ENCODE measurements at regions of chr4 and their contacts with region 1.

Region 1: DNA sequence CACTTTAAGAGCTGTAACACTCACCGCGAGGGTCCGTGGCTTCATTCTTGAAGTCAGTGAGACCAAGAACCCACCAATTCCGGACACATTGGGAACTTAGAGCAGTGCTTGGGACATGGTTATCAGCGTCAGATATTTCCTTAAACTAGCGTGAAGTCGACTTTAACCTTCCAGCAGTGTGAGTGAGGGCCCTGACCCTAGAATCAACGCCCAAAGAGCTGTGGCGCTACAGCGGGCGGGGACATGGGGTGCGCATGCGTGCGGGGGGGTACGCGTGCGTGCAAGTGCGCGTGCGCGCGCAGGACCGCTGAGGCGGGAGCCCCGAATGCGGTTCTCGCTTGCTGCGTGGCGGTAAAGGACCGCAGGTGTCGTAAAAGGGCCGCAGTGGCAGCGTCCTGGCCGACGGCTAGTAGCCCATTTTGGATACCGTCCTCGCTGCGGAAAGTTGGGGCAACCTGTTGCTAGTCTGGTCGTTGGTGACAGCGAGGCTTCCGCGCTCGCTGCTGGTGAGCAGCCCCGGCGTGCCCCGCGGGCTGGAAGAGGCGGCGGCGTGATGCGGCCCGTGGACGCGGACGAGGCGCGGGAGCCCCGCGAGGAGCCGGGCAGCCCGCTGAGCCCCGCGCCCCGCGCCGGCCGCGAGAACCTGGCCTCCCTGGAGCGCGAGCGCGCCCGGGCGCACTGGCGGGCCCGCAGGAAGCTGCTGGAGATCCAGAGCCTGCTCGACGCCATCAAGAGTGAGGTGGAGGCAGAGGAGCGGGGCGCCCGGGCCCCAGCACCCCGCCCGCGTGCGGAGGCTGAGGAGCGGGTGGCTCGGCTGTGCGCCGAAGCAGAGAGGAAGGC is 19.8 kb upstream of the S100P start:
- DNase-seq: peak; percentile 96
- ATAC-seq: peak; percentile 75
- H3K4me3 Mint-ChIP-seq: peak overlapping the region; percentile 94
- H3K27ac Mint-ChIP-seq: peak overlapping the region; percentile 100
- H3K4me1 Mint-ChIP-seq: peaks cover 45% of the 10 kb centered on the region
- H3K27me3 Mint-ChIP-seq: no peaks in the 10 kb centered on the region

Region 2: DNA sequence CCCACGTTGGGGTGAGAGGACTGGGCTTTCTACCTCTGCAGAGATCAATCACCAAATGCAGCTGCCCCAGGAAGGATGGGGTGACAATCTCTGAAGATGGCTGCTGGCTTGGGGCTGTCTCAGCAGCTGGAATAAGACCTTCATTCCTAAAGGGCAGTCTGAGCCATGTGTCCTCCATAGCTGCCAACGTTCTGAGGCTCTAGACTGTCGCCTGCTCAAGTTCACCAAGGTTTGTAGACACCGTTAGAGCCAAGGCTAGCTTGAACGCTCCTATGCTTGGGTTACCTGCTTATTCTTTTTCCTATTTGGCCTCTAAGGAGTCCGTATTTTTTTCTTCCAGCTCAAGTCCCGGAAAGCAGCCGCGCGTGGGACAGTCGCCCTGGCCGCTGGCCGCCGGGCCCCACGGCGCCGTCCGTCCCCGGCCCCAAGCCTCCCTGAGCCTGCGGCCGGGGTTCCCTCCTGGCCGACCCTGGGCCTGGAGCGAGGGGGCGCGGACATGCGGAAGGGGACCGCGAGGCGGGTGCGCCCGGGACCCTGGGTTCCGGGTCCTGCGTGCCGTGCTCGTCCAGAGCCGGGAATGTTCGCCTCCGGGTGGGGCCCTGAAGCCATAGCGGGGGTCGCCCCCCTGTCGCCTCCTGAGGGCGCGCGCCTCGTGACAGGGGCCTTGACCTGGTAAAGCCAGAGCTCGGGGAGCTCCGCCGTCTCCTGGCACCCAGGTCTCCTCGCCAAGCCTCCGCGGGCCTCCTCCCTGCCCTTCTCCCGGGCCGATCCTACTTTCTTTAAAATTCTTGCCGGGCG is 10.1 kb before region 1 on chr4:
- CTCF ChIA-PET with region 1: interaction called, 7 read pairs
- POLR2A ChIA-PET with region 1: interaction called, 25 read pairs
- DNase-seq: no peak
- ATAC-seq: no peak
- H3K4me3 Mint-ChIP-seq: peak overlapping the region; percentile 17
- H3K27ac Mint-ChIP-seq: no peak overlapping the region
- H3K4me1 Mint-ChIP-seq: peaks cover 3% of the 10 kb centered on the region
- H3K27me3 Mint-ChIP-seq: peaks cover 32% of the 10 kb centered on the region

Region 3: GRCh38 chr4:6688879-6689505 is 15.1 kb after region 1 on chr4:
- CTCF ChIA-PET with region 1: interaction called, 94 read pairs
- POLR2A ChIA-PET with region 1: interaction called, 87 read pairs
- DNase-seq: peak; percentile 92
- ATAC-seq: peak; percentile 83
- H3K4me3 Mint-ChIP-seq: peak overlapping the region; percentile 81
- H3K27ac Mint-ChIP-seq: peak overlapping the region; percentile 91
- H3K4me1 Mint-ChIP-seq: peaks cover 85% of the 10 kb centered on the region
- H3K27me3 Mint-ChIP-seq: no peaks in the 10 kb centered on the region

Region 4: GRCh38 chr4:6695660-6696630 is 22.1 kb after region 1 on chr4:
- CTCF ChIA-PET with region 1: interaction called, 354 read pairs
- POLR2A ChIA-PET with region 1: interaction called, 87 read pairs
- DNase-seq: peak; percentile 72
- ATAC-seq: peak; percentile 77
- H3K4me3 Mint-ChIP-seq: peak overlapping the region; percentile 73
- H3K27ac Mint-ChIP-seq: peak overlapping the region; percentile 96
- H3K4me1 Mint-ChIP-seq: peaks cover 88% of the 10 kb centered on the region
- H3K27me3 Mint-ChIP-seq: no peaks in the 10 kb centered on the region

Region 5: GRCh38 chr4:6709230-6710114 is 35.6 kb after region 1 on chr4 and contains the start of gene MRFAP1L1:
- CTCF ChIA-PET with region 1: interaction called, 354 read pairs
- POLR2A ChIA-PET with region 1: interaction called, 73 read pairs
- DNase-seq: peak; percentile 98
- ATAC-seq: peak; percentile 84
- H3K4me3 Mint-ChIP-seq: peak within 1 kb of the TSS; percentile 99
- H3K27ac Mint-ChIP-seq: peak within 1 kb of the TSS; percentile 95
- H3K4me1 Mint-ChIP-seq: peaks cover 51% of the 10 kb centered on the region
- H3K27me3 Mint-ChIP-seq: no peaks in the 10 kb centered on the region
- total RNA-seq, gene MRFAP1L1: 65.5 to 67.4 TPM

Region 6: GRCh38 chr4:6716018-6716911 is 42.4 kb after region 1 on chr4 and contains the start of gene BLOC1S4:
- CTCF ChIA-PET with region 1: interaction called, 354 read pairs
- POLR2A ChIA-PET with region 1: interaction called, 39 read pairs
- DNase-seq: peak; percentile 92
- ATAC-seq: peak; percentile 83
- H3K4me3 Mint-ChIP-seq: peak within 1 kb of the TSS; percentile 91
- H3K27ac Mint-ChIP-seq: peak within 1 kb of the TSS; percentile 97
- H3K4me1 Mint-ChIP-seq: peaks cover 35% of the 10 kb centered on the region
- H3K27me3 Mint-ChIP-seq: no peaks in the 10 kb centered on the region
- total RNA-seq, gene BLOC1S4: 19.6 to 21.5 TPM

Region 7: GRCh38 chr4:6727081-6727942 is 53.4 kb after region 1 on chr4:
- CTCF ChIA-PET with region 1: no interaction called
- POLR2A ChIA-PET with region 1: no interaction called
- DNase-seq: no peak
- ATAC-seq: no peak
- H3K4me3 Mint-ChIP-seq: no peak overlapping the region
- H3K27ac Mint-ChIP-seq: no peak overlapping the region
- H3K4me1 Mint-ChIP-seq: peaks cover 7% of the 10 kb centered on the region
- H3K27me3 Mint-ChIP-seq: no peaks in the 10 kb centered on the region